AG04450 (cell line): ENCODE measurements at regions of chr10 and their contacts with region 1.

Region 1: DNA sequence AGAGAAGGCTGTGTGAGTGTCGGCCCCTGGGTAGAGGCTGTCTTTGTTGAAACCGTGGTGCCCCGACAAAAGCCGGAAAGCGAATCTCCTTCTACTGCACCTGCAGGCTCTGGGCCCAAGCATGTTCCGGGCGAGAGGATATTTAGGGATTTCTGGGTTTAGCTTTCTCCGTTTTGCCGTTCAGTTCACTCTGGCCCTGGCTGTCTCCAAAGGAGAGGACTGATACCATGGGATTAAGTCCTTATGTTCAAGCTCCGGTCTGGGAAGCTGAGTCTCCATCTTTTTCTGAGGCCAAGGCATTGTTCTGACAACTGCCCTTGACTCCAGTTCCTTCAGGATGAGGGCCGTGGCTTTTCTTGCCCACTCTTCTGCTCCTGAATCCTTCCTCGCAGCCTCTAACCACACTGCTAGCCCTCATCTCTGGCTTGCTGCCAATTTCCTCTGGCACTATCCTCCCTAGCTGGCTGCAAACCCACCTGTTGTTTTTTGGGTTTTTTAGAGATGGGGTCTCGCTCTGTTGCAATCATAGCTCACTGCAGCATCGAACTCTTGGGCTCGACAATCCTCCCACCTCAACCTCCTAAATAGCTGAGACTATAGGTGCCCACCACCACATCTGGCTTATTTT is 206.8 kb downstream of the SKIDA1 start:
- DNase-seq: no peak
- H3K4me3 ChIP-seq: no peak overlapping the region
- H3K27ac ChIP-seq: peak overlapping the region; percentile 42
- H3K27me3 ChIP-seq: no peaks in the 10 kb centered on the region
- CTCF ChIP-seq: no peak

Region 2: DNA sequence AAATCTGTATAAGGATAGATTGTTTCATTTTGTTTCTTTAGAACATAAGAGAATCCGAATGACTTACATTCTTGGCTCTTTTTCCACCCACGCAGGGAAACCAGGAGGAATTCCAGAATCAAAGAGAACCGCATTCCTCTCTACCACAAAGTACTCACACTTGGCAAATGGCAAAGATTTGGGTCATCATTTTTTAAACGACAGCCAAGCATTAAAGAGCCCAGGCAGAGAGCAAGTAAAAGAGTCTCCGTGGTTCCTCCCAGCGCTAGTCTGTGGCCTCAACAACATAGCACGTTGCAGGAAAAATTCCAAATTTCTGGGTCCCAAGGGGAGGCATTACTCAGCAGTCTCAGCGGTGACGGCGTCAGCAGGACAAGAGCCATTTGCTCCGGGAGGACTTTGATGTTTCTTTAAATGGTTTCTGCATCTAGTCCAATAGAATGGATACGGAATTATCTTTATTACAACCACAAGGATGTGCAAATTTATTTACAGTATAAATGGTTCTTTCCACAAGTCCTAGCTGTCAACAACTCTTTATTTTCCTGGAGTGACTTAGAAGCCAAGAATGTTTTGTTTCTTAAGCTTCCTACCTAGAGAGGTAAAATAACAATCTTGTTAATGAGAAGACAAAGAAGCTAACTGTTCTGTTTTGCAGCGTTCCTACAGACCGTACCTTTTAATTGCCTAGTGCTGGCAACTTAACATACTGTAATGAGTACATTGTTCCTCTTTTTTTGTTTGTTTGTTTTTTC is 25.7 kb before region 1 on chr10:
- CTCF ChIA-PET with region 1: no interaction called
- POLR2A ChIA-PET with region 1: interaction called, 24 read pairs
- DNase-seq: peak; percentile 92
- H3K4me3 ChIP-seq: peak overlapping the region; percentile 51
- H3K27ac ChIP-seq: peak overlapping the region; percentile 68
- H3K27me3 ChIP-seq: no peaks in the 10 kb centered on the region
- CTCF ChIP-seq: no peak

Region 3: GRCh38 chr10:21638681-21639080 is 320.0 kb after region 1 on chr10:
- CTCF ChIA-PET with region 1: no interaction called
- POLR2A ChIA-PET with region 1: no interaction called
- DNase-seq: no peak
- H3K4me3 ChIP-seq: no peak overlapping the region
- H3K27ac ChIP-seq: no peak overlapping the region
- H3K27me3 ChIP-seq: no peaks in the 10 kb centered on the region
- CTCF ChIP-seq: no peak